Naive thymus-derived CD4-positive, alpha-beta T cell (primary cell): ENCODE measurements at regions of chr10 and their contacts with region 1.

Region 1: GRCh38 chr10:73997787-73998622 is at the start of gene VCL:
- DNase-seq: peak; percentile 90 to 97 (median 95)
- ATAC-seq: peak; percentile 99
- H3K4me3 ChIP-seq: peak within 1 kb of the TSS; percentile 71
- H3K4me3 Mint-ChIP-seq: peak within 1 kb of the TSS; percentile 83 to 100 (median 97)
- H3K27ac ChIP-seq: peak within 1 kb of the TSS; percentile 91
- H3K27ac Mint-ChIP-seq: peak within 1 kb of the TSS; percentile 83 to 99 (median 98)
- H3K4me1 ChIP-seq: peaks cover 19 to 22% of the 10 kb centered on the region in 2 donors
- H3K4me1 Mint-ChIP-seq: peaks cover 43 to 53% (median 48%) of the 10 kb centered on the region in 7 donors
- H3K27me3 ChIP-seq: no peaks in the 10 kb centered on the region
- H3K27me3 Mint-ChIP-seq: no peaks in the 10 kb centered on the region
- total RNA-seq, gene VCL: 9.0 to 67.7 (median 21.6) TPM

Region 2: GRCh38 chr10:73874267-73875138 is 123.5 kb before region 1 on chr10 and contains the start of gene CAMK2G:
- CTCF ChIA-PET with region 1: no interaction called
- POLR2A ChIA-PET with region 1: no interaction called
- intact Hi-C with region 1: loop called in 1 of 2 experiments (anchors 2 kb)
- DNase-seq: peak; percentile 68 to 86 (median 83)
- ATAC-seq: peak; percentile 91
- H3K4me3 ChIP-seq: peak within 1 kb of the TSS; percentile 94
- H3K4me3 Mint-ChIP-seq: peak within 1 kb of the TSS; percentile 83 to 96 (median 90)
- H3K27ac ChIP-seq: peak within 1 kb of the TSS; percentile 86
- H3K27ac Mint-ChIP-seq: peak within 1 kb of the TSS; percentile 81 to 97 (median 94)
- H3K4me1 ChIP-seq: peaks cover 30 to 48% of the 10 kb centered on the region in 2 donors
- H3K4me1 Mint-ChIP-seq: peaks cover 41 to 84% (median 74%) of the 10 kb centered on the region in 7 donors
- H3K27me3 ChIP-seq: no peaks in the 10 kb centered on the region
- H3K27me3 Mint-ChIP-seq: peaks cover 0 to 2% (median 0%) of the 10 kb centered on the region in 5 donors
- total RNA-seq, gene CAMK2G: 44.6 to 70.9 (median 61.9) TPM

Region 3: DNA sequence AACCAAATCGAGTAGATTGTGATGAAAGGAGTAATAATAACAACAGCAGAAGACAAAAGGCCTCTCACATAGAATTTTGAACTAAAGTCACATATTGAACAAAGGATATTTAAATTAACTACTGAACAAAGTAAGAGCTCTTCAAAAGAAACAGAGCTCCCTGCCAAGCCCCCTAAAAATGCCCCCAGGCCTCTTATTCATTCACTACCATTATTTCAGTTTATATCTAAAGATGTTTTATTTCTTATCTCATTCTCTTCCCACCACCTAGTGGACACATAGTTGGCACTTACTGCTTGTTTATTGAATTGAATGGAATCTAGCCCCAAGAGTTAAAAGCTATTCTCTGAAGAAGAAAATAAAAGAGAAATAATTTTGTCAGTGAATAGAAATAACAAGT is 37.3 kb after region 1 on chr10:
- CTCF ChIA-PET with region 1: interaction called, 4 read pairs
- POLR2A ChIA-PET with region 1: no interaction called
- intact Hi-C with region 1: loop called in 1 of 2 experiments (anchors 2 kb)
- DNase-seq: peak in 4 of 9 donors; percentile 7 to 19 (median 10)
- ATAC-seq: no peak
- H3K4me3 ChIP-seq: no peak overlapping the region
- H3K4me3 Mint-ChIP-seq: no peak overlapping the region
- H3K27ac ChIP-seq: no peak overlapping the region
- H3K27ac Mint-ChIP-seq: peak overlapping the region in 8 of 9 donors; percentile 13 to 74 (median 34)
- H3K4me1 ChIP-seq: peaks cover 0 to 5% of the 10 kb centered on the region in 2 donors
- H3K4me1 Mint-ChIP-seq: peaks cover 22 to 52% (median 45%) of the 10 kb centered on the region in 7 donors
- H3K27me3 ChIP-seq: no peaks in the 10 kb centered on the region
- H3K27me3 Mint-ChIP-seq: no peaks in the 10 kb centered on the region

Region 4: DNA sequence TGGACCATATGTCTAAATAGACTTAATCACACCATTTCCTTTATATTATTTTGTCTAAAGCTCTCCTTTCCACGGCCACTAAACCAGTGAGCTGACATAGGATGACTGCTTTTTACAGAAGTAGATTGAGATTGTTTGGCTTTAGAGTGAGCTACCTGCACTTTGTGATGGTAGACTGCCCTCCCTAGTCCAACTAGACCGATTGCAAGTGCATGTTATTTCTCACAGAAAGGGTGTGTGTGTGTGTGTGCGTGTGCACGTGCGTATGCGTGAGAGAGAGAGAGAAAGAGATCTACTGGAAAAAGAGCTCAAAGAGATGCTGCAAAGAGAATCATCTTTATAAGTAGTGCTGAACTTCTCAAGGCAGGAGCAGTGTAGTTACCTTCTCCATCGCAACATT is 60.7 kb after region 1 on chr10:
- CTCF ChIA-PET with region 1: no interaction called
- POLR2A ChIA-PET with region 1: no interaction called
- intact Hi-C with region 1: loop called in 1 of 2 experiments (anchors 2 kb)
- DNase-seq: peak in 7 of 9 donors; percentile 12 to 60 (median 29)
- ATAC-seq: peak; percentile 70
- H3K4me3 ChIP-seq: no peak overlapping the region
- H3K4me3 Mint-ChIP-seq: peak overlapping the region in 7 of 10 donors; percentile 1 to 76 (median 8)
- H3K27ac ChIP-seq: no peak overlapping the region
- H3K27ac Mint-ChIP-seq: peak overlapping the region in 5 of 9 donors; percentile 4 to 52 (median 12)
- H3K4me1 ChIP-seq: peaks cover 10 to 15% of the 10 kb centered on the region in 2 donors
- H3K4me1 Mint-ChIP-seq: peaks cover 18 to 44% (median 26%) of the 10 kb centered on the region in 7 donors
- H3K27me3 ChIP-seq: no peaks in the 10 kb centered on the region
- H3K27me3 Mint-ChIP-seq: no peaks in the 10 kb centered on the region

Region 5: DNA sequence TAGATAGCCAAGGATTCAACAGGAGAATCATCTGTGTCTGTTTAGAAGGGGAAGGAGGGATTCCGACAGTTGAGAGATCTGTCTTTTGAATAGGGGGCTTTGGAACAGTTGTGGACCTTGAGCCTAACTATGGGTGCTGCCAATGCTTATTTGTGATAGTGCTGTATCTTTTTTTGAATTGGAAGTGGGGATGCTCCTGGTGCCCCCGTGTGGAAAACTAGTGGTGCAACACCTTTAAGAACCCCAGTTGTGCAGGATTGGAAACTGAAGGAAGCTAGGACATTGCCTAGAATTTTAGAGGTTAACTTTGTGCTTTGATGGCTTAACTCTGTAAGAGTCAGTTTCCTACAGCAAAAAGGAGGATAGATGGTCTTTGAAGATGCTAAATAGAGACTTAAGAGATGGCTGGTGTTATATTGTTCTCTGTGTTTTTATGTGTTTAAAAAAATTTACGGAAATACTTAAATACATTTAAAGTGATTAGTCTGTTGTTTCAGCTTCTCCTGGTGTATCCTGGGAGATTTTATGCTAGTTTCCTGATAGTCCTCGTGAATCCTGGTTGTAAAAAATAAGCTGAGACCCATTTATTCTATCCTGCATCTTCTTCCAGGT is 83.3 kb after region 1 on chr10:
- CTCF ChIA-PET with region 1: no interaction called
- POLR2A ChIA-PET with region 1: no interaction called
- intact Hi-C with region 1: loop called (anchors 2 to 5 kb)
- DNase-seq: peak in 7 of 9 donors; percentile 14 to 51 (median 41)
- ATAC-seq: peak; percentile 71
- H3K4me3 ChIP-seq: no peak overlapping the region
- H3K4me3 Mint-ChIP-seq: no peak overlapping the region
- H3K27ac ChIP-seq: no peak overlapping the region
- H3K27ac Mint-ChIP-seq: no peak overlapping the region
- H3K4me1 ChIP-seq: peaks cover 0 to 15% of the 10 kb centered on the region in 2 donors
- H3K4me1 Mint-ChIP-seq: peaks cover 0 to 40% (median 6%) of the 10 kb centered on the region in 7 donors
- H3K27me3 ChIP-seq: no peaks in the 10 kb centered on the region
- H3K27me3 Mint-ChIP-seq: no peaks in the 10 kb centered on the region